ENCODE measurements at regions of chr6 and their contacts with region 1.

Region 1: DNA sequence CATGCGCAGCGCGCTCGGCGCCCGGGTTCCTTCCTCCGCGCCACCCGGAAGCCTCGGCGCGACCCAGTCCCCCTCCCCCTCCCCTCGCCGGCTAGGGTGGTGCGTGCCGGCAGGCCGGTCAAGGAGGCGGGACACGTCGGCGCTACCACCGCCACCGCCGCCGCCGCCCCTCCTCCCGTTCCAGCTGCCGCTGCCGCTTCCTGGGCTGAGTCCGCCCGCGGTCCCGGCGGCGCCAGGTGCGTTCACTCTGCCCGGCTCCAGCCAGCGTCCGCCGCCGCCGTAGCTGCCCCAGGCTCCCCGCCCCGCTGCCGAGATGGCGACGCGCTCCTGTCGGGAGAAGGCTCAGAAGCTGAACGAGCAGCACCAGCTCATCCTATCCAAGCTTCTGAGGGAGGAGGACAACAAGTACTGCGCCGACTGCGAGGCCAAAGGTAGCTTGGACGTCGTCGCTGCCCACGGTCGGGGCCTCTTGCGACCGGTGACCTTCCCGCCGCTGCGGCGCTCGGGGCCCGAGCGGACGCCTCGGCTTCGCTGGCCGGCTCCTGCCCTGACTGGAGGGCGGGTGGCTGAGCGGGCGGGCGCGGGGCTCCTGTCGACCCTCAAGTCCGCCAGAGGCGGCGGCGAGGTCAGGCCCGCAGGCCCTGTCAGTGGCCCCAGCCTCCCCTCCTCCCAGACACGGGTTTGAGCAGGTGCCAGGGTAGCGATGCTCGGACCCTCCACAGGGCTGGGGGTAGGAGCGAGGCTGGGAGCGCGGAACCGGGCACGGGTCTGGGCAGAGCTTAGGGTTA is at the start of gene SMAP1:
- DNase-seq: peak; percentile 97
- H3K4me3 ChIP-seq: peak within 1 kb of the TSS; percentile 89 to 96 (median 93)
- H3K27ac ChIP-seq: peak within 1 kb of the TSS; percentile 92 to 94 (median 94)
- H3K4me1 ChIP-seq: peaks cover 13 to 35% (median 25%) of the 10 kb centered on the region in 4 donors
- H3K27me3 ChIP-seq: no peaks in the 10 kb centered on the region
- CTCF ChIP-seq: peak in 2 of 3 experiments; percentile 11 to 25
- EP300 ChIP-seq: no peak
- POLR2A ChIP-seq: peak; percentile 59
- total RNA-seq, gene SMAP1: 23.7 to 33.1 (median 29.5) TPM

Region 2: DNA sequence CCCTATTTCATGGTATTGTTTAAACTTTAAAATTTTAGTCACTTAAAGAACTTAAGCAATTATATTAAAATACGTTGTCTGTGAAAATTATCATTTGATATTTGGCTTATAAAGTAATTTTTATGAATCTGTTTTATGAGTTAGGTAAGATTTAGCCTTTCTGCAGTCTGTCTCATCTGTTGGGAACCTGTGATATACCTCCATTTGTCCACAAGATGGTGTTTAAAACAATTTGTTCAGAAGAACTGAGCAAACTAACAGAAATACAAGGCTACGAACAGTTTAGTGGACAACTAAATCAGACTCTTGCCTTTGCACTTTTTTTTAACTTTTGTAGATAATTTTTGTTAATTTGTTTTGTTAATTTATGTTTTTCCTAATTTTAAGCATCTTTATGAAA is 457.4 kb before region 1 on chr6:
- intact Hi-C with region 1: no loop called
- DNase-seq: no peak
- H3K4me3 ChIP-seq: no peak overlapping the region
- H3K27ac ChIP-seq: no peak overlapping the region
- H3K4me1 ChIP-seq: no peaks in the 10 kb centered on the region
- H3K27me3 ChIP-seq: no peaks in the 10 kb centered on the region
- CTCF ChIP-seq: no peak
- EP300 ChIP-seq: no peak
- POLR2A ChIP-seq: no peak

Region 3: GRCh38 chr6:70413114-70413991 is 254.6 kb before region 1 on chr6 and contains the start of gene FAM135A:
- intact Hi-C with region 1: loop called (anchors 10 kb)
- DNase-seq: peak; percentile 98
- H3K4me3 ChIP-seq: peak within 1 kb of the TSS; percentile 82 to 97 (median 92)
- H3K27ac ChIP-seq: peak within 1 kb of the TSS; percentile 86 to 91 (median 90)
- H3K4me1 ChIP-seq: peaks cover 10 to 24% (median 22%) of the 10 kb centered on the region in 4 donors
- H3K27me3 ChIP-seq: no peaks in the 10 kb centered on the region
- CTCF ChIP-seq: no peak
- EP300 ChIP-seq: no peak
- POLR2A ChIP-seq: no peak
- total RNA-seq, gene FAM135A: 14.8 to 21.3 (median 19.8) TPM

Region 4: GRCh38 chr6:70566751-70567382 is 101.0 kb before region 1 on chr6 and contains the start of gene SDHAF4:
- intact Hi-C with region 1: loop called (anchors 5 kb)
- DNase-seq: peak; percentile 97
- H3K4me3 ChIP-seq: peak within 1 kb of the TSS; percentile 75 to 96 (median 91)
- H3K27ac ChIP-seq: peak within 1 kb of the TSS; percentile 86 to 89 (median 88)
- H3K4me1 ChIP-seq: peaks cover 3 to 19% (median 14%) of the 10 kb centered on the region in 4 donors
- H3K27me3 ChIP-seq: no peaks in the 10 kb centered on the region
- CTCF ChIP-seq: peak in 2 of 3 experiments; percentile 11 to 26
- EP300 ChIP-seq: no peak
- POLR2A ChIP-seq: no peak
- total RNA-seq, gene SDHAF4: 5.2 to 11.2 (median 8.7) TPM

Measured in esophagus muscularis mucosa (tissue), 4 donors.